ENCODE measurements at regions of chr2 and their contacts with region 1.

Region 1: DNA sequence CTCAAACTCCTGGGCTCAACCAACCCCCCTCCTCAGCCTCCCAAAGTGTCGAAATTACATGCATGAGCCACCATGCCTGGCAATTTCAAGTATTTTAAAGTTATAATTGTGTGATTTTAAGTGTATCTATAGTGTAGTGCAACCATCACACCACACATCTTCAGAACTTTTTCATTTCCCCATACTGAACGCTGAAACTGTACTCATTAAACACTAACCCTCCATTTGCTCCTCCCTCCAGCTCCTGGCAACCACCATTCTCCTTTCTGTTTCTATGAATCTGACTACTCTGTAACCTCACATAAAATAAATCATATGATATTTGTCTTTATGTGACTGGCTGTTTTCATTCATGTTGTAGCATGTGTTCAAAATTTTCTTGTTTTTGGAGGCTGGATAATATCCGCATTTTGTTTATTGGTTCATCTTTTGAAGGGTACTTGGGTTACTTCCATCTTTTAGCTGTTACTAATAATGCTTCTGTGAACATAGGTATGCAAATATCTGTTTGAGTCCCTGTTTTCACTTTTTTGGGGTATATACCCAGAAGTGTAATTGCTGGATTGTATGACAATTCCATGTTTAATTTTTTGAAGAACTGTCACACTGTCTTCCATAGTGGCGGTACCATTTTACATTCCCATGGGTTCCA is 188.2 kb downstream of the PLCL1 start:
- DNase-seq: no peak
- ATAC-seq: peak; percentile 98
- H3K4me3 ChIP-seq: no peak overlapping the region
- H3K27ac ChIP-seq: peak overlapping the region; percentile 43; the same call in 1 of the 2 replicates
- H3K4me1 ChIP-seq: peaks cover 16% of the 10 kb centered on the region
- H3K27me3 ChIP-seq: no peaks in the 10 kb centered on the region
- CTCF ChIP-seq: no peak
- EP300 ChIP-seq: 0 out of 4 replicates have a peak, but pooled peaks of 1 of the 2 experiments have one; percentile 9
- POLR2A ChIP-seq: no peak
- RAD21 ChIP-seq: no peak

Region 2: DNA sequence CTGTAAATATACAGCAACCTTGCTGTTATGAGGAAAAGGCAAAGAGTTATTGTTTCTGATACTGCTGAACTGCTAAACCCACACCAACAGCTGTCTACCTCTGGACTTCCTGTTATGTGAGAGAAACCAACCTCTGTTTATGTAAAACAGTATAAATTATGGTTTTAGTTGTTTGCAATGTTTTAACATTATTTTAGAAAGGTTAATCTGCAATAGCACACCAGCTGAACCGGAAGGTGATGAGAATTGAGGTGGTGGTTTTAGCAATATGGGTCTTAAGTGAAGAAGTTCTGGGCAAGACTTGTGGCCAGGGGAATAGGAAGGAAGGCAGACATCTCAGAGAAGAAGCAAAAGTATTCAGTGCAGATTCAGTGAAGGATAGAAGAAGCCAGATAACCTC is 49.6 kb after region 1 on chr2:
- CTCF ChIA-PET with region 1: no interaction called
- POLR2A ChIA-PET with region 1: interaction called, 4 read pairs
- RAD21 ChIA-PET with region 1: interaction called, 13 read pairs
- SMC1A ChIA-PET with region 1: interaction called, 10 read pairs
- in situ Hi-C with region 1: no loop called
- intact Hi-C with region 1: no loop called
- DNase-seq: no peak
- ATAC-seq: peak; percentile 71
- H3K4me3 ChIP-seq: no peak overlapping the region
- H3K27ac ChIP-seq: peak overlapping the region; percentile 14; the same call in 1 of the 2 replicates
- H3K4me1 ChIP-seq: no peaks in the 10 kb centered on the region
- H3K27me3 ChIP-seq: no peaks in the 10 kb centered on the region
- CTCF ChIP-seq: no peak
- EP300 ChIP-seq: peak in 1 of 2 experiments; percentile 35; a peak in 1 of 4 replicates
- POLR2A ChIP-seq: no peak
- RAD21 ChIP-seq: no peak

Measured in GM12878 (cell line).